ENCODE measurements at regions of chr12 and their contacts with region 1.

Region 1: GRCh38 chr12:68610370-68611093 is at the start of gene RAP1B:
- DNase-seq: peak; percentile 89 to 92 (median 91)
- H3K4me3 ChIP-seq: peak within 1 kb of the TSS; percentile 90
- H3K27ac ChIP-seq: peak within 1 kb of the TSS; percentile 86 to 89
- H3K4me1 ChIP-seq: peaks cover 7% of the 10 kb centered on the region
- H3K27me3 ChIP-seq: no peaks in the 10 kb centered on the region
- CTCF ChIP-seq: no peak
- EP300 ChIP-seq: peak; percentile 30
- POLR2A ChIP-seq: peak; percentile 96
- total RNA-seq, gene RAP1B: 81.9 to 146 (median 107) TPM

Region 2: DNA sequence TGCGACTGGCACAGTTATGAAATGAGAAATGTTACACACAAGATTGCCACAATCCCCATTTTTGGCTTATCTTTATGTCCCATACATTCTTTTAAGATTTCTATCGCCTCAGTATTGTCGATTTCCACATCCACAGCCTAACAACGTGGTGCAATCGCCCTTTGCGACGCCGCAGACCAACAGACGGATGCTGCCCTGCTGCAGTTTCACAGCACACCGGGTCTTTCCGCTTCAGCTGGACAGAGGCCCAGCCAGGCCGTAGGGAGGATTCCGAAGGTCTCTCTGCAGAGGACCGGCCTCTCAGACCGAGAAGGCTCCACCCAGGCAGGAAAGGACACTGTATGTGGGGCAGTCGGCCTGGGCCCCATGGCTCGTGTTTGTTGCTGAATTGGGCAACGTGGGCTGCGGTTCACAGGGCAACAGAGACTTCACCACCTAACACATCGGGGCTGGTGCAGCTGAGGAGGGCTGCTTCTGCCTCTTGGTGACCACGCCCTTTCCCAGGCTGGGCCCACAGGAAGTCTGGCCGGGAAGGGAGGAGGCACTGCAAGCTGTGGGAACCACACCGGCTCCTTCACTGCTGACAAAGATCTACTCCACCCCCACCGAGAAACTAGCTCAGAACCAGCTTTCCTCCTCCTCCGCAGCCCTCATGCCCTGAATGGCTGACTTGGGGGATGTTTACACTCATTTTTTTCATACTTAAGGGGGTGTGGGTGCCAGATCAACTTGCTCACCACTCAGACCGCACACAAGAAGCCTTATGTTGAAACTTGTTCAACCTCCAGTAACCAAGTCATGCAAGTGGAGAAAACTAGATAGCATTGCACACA is 245.4 kb before region 1 on chr12:
- intact Hi-C with region 1: loop called in 1 of 4 experiments (anchors 10 kb)
- DNase-seq: peak; percentile 71 to 84 (median 76)
- H3K4me3 ChIP-seq: peak overlapping the region; percentile 24
- H3K27ac ChIP-seq: peak overlapping the region in 1 of 2 donors; percentile 51
- H3K4me1 ChIP-seq: no peaks in the 10 kb centered on the region
- H3K27me3 ChIP-seq: no peaks in the 10 kb centered on the region
- CTCF ChIP-seq: no peak
- EP300 ChIP-seq: no peak
- POLR2A ChIP-seq: no peak

Region 3: DNA sequence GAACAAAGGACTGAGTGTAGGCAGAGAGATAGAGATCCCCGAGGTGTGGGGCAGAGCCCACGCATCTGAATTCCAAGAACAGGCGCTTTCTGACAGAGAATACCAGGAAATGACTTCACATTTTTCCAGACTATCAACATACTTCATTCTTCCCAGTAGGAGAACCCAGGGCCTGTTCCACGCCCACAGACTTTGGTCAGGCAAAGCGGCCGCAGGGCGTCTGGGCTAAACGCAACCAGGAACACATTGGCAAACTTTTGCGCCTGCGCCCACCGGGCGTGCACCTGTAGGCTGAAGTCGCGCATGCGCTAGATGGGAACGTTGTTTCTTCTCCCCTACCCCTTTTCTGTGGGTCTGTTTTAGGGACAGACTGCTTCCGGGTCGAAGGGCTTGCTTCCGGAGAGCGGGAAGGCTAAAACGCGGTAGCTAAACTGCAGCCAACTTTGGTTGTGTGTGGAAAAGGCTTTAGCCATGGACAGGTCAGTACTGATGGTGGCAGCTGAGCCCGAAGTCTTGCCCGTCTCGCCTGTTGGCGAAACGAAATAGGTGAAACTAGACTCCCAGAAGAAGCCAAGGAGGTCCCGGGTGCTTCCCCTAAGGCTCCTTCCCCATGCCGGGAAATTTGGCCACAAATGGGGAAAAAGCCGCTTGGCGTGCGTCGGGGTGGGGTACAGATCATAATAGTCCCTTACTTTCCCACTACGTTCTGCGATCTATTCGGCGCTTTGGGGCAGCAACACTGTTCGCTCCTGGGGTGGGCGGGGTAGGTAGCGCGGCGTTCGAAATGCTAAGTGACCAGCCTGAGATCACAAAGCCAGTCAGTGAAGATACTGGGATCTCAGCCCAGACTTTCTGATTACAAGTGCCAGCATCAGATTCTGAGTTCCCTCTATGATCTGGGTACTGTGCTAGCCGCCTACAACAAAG is 76.3 kb after region 1 on chr12 and contains the start of gene NUP107:
- intact Hi-C with region 1: loop called in 1 of 4 experiments (anchors 10 kb)
- DNase-seq: peak; percentile 99 to 100 (median 99)
- H3K4me3 ChIP-seq: peak within 1 kb of the TSS; percentile 96
- H3K27ac ChIP-seq: peak within 1 kb of the TSS in 1 of 2 donors; percentile 62
- H3K4me1 ChIP-seq: peaks cover 2% of the 10 kb centered on the region
- H3K27me3 ChIP-seq: no peaks in the 10 kb centered on the region
- CTCF ChIP-seq: peak in 2 of 3 donors; percentile 17 to 38
- EP300 ChIP-seq: peak; percentile 67
- POLR2A ChIP-seq: peak; percentile 54
- total RNA-seq, gene NUP107: 24.8 to 56.6 (median 46.9) TPM